B cell (primary cell): ENCODE measurements at regions of chr6 and their contacts with region 1.

Region 1: GRCh38 chr6:134436281-134436815 is 118.4 kb upstream of the SGK1 start:
- DNase-seq: peak; percentile 27
- ATAC-seq: peak; percentile 79
- H3K4me3 ChIP-seq: peak overlapping the region in 3 of 5 experiments; percentile 12 to 31 (median 26)
- H3K4me3 Mint-ChIP-seq: peak overlapping the region; percentile 81
- H3K27ac ChIP-seq: no peak overlapping the region
- H3K27ac Mint-ChIP-seq: peak overlapping the region; percentile 84
- H3K4me1 ChIP-seq: peaks cover 6 to 14% of the 10 kb centered on the region in 2 donors
- H3K4me1 Mint-ChIP-seq: peaks cover 20% of the 10 kb centered on the region
- H3K27me3 ChIP-seq: no peaks in the 10 kb centered on the region
- H3K27me3 Mint-ChIP-seq: no peaks in the 10 kb centered on the region
- CTCF ChIP-seq: no peak

Region 2: GRCh38 chr6:134331256-134331655 is 105.1 kb before region 1 on chr6:
- CTCF ChIA-PET with region 1: no interaction called
- POLR2A ChIA-PET with region 1: no interaction called
- intact Hi-C with region 1: loop called (anchors 10 kb)
- DNase-seq: no peak
- ATAC-seq: no peak
- H3K4me3 ChIP-seq: no peak overlapping the region
- H3K4me3 Mint-ChIP-seq: no peak overlapping the region
- H3K27ac ChIP-seq: no peak overlapping the region
- H3K27ac Mint-ChIP-seq: no peak overlapping the region
- H3K4me1 ChIP-seq: no peaks in the 10 kb centered on the region
- H3K4me1 Mint-ChIP-seq: no peaks in the 10 kb centered on the region
- H3K27me3 ChIP-seq: no peaks in the 10 kb centered on the region
- H3K27me3 Mint-ChIP-seq: no peaks in the 10 kb centered on the region
- CTCF ChIP-seq: no peak

Region 3: GRCh38 chr6:134373282-134373922 is 62.9 kb before region 1 on chr6:
- CTCF ChIA-PET with region 1: no interaction called
- POLR2A ChIA-PET with region 1: no interaction called
- intact Hi-C with region 1: loop called (anchors 5 kb)
- DNase-seq: peak; percentile 68
- ATAC-seq: peak; percentile 93
- H3K4me3 ChIP-seq: peak overlapping the region in 1 of 5 experiments; percentile 8
- H3K4me3 Mint-ChIP-seq: peak overlapping the region; percentile 3
- H3K27ac ChIP-seq: no peak overlapping the region
- H3K27ac Mint-ChIP-seq: peak overlapping the region; percentile 22
- H3K4me1 ChIP-seq: peaks cover 10 to 14% of the 10 kb centered on the region in 2 donors
- H3K4me1 Mint-ChIP-seq: peaks cover 23% of the 10 kb centered on the region
- H3K27me3 ChIP-seq: no peaks in the 10 kb centered on the region
- H3K27me3 Mint-ChIP-seq: no peaks in the 10 kb centered on the region
- CTCF ChIP-seq: no peak

Region 4: GRCh38 chr6:134466751-134467516 is 30.6 kb after region 1 on chr6:
- CTCF ChIA-PET with region 1: no interaction called
- POLR2A ChIA-PET with region 1: no interaction called
- intact Hi-C with region 1: no loop called
- DNase-seq: no peak
- ATAC-seq: no peak
- H3K4me3 ChIP-seq: no peak overlapping the region
- H3K4me3 Mint-ChIP-seq: no peak overlapping the region
- H3K27ac ChIP-seq: no peak overlapping the region
- H3K27ac Mint-ChIP-seq: no peak overlapping the region
- H3K4me1 ChIP-seq: peaks cover 0 to 6% of the 10 kb centered on the region in 2 donors
- H3K4me1 Mint-ChIP-seq: peaks cover 8% of the 10 kb centered on the region
- H3K27me3 ChIP-seq: no peaks in the 10 kb centered on the region
- H3K27me3 Mint-ChIP-seq: no peaks in the 10 kb centered on the region
- CTCF ChIP-seq: no peak

Region 5: GRCh38 chr6:134577998-134578397 is 141.7 kb after region 1 on chr6:
- CTCF ChIA-PET with region 1: no interaction called
- POLR2A ChIA-PET with region 1: no interaction called
- intact Hi-C with region 1: no loop called
- DNase-seq: no peak
- ATAC-seq: no peak
- H3K4me3 ChIP-seq: no peak overlapping the region
- H3K4me3 Mint-ChIP-seq: no peak overlapping the region
- H3K27ac ChIP-seq: no peak overlapping the region
- H3K27ac Mint-ChIP-seq: no peak overlapping the region
- H3K4me1 ChIP-seq: no peaks in the 10 kb centered on the region
- H3K4me1 Mint-ChIP-seq: no peaks in the 10 kb centered on the region
- H3K27me3 ChIP-seq: no peaks in the 10 kb centered on the region
- H3K27me3 Mint-ChIP-seq: peaks cover 15% of the 10 kb centered on the region
- CTCF ChIP-seq: no peak

Region 6: DNA sequence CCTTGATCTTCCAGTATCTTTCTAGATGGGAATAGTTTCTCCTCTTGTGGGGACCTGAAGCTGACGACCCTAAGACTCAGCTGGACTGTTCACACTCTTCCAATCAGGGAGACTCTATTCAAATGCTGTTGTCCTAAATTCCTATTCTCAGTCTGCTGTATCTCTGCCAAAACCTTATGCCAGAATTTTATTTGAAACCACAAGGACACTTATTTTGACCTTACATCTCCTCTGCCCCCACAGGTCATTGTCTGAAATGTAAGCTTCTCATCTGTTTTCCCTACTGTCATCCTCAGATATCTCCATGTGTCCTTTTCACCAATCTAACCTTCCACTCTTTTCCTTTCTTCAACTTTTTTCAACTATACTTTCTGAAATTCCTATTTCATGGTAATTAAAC is 171.1 kb after region 1 on chr6:
- CTCF ChIA-PET with region 1: no interaction called
- POLR2A ChIA-PET with region 1: no interaction called
- intact Hi-C with region 1: no loop called
- DNase-seq: no peak
- ATAC-seq: no peak
- H3K4me3 ChIP-seq: no peak overlapping the region
- H3K4me3 Mint-ChIP-seq: no peak overlapping the region
- H3K27ac ChIP-seq: no peak overlapping the region
- H3K27ac Mint-ChIP-seq: no peak overlapping the region
- H3K4me1 ChIP-seq: no peaks in the 10 kb centered on the region
- H3K4me1 Mint-ChIP-seq: no peaks in the 10 kb centered on the region
- H3K27me3 ChIP-seq: no peaks in the 10 kb centered on the region
- H3K27me3 Mint-ChIP-seq: no peaks in the 10 kb centered on the region
- CTCF ChIP-seq: no peak